ENCODE measurements at regions of chr4 and their contacts with region 1.

Region 1: DNA sequence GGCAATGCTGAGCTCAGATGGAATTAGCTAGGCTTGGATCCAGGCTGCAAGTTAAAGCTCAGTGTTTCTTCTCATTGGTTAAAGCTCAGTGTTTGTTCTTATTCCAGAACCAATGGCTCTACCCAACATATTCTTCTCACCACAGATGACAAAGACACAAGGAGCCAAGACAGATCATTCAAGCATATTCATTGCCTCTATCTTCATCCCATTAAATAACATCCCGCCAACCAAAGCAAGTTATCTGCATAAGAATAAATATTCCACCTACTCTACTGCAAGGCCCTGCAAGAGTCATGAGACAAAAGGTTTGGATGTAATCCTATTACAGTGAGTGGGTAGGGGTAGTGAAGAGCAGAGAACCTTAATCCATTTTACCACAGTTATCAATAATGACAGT is 766.5 kb downstream of the C4orf33 start:
- DNase-seq: no peak
- H3K4me3 ChIP-seq: no peak overlapping the region
- H3K27ac ChIP-seq: no peak overlapping the region
- H3K4me1 ChIP-seq: no peaks in the 10 kb centered on the region
- H3K27me3 ChIP-seq: no peaks in the 10 kb centered on the region
- CTCF ChIP-seq: no peak
- POLR2A ChIP-seq: no peak

Region 2: GRCh38 chr4:129264008-129264657 is 598.3 kb before region 1 on chr4:
- intact Hi-C with region 1: loop called (anchors 5 kb)
- DNase-seq: no peak
- H3K4me3 ChIP-seq: no peak overlapping the region
- H3K27ac ChIP-seq: no peak overlapping the region
- H3K4me1 ChIP-seq: no peaks in the 10 kb centered on the region
- H3K27me3 ChIP-seq: no peaks in the 10 kb centered on the region
- CTCF ChIP-seq: no peak
- POLR2A ChIP-seq: no peak

Region 3: GRCh38 chr4:130468340-130468739 is 605.9 kb after region 1 on chr4:
- intact Hi-C with region 1: no loop called
- DNase-seq: no peak
- H3K4me3 ChIP-seq: no peak overlapping the region
- H3K27ac ChIP-seq: no peak overlapping the region
- H3K4me1 ChIP-seq: no peaks in the 10 kb centered on the region
- H3K27me3 ChIP-seq: no peaks in the 10 kb centered on the region
- CTCF ChIP-seq: no peak
- POLR2A ChIP-seq: no peak

Measured in breast epithelium (tissue), 4 donors.